MCF 10A (cell line): ENCODE measurements at regions of chr6 and their contacts with region 1.

Region 1: DNA sequence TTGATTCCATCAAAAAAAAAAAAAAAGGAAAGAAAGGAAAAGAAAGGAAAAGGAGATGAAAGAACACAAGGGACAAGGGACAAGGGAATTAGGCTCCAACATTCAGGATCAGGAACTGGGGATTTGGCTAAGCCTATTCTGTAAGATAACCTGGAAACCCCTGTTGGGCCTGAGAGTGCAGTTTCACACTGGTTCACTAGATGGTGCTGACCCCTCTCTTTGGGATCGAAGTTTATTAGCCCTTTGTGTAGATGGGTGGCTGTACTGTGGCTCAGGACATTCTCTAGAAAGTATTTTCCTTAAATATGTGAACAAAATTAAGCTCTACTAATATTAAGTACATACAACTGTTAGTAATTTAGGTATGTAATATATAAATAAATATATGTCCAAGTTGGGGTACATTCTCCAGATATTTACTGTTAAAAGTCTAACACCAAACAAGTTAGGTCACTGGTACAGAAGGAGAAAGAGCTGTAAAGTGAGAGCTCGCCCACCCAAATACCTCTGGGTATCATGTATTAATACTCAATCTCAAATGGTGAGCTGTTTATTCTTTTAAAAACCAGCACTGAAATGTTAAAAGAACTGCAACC is 6.3 kb downstream of the OR2A4 start:
- DNase-seq: peak; percentile 78
- H3K4me3 Mint-ChIP-seq: no peak overlapping the region
- H3K27ac Mint-ChIP-seq: no peak overlapping the region
- H3K4me1 Mint-ChIP-seq: no peaks in the 10 kb centered on the region
- H3K27me3 Mint-ChIP-seq: no peaks in the 10 kb centered on the region
- CTCF ChIP-seq: peak; percentile 92

Region 2: GRCh38 chr6:131615275-131615674 is 79.7 kb before region 1 on chr6:
- CTCF ChIA-PET with region 1: no interaction called
- POLR2A ChIA-PET with region 1: no interaction called
- intact Hi-C with region 1: no loop called
- DNase-seq: no peak
- H3K4me3 Mint-ChIP-seq: no peak overlapping the region
- H3K27ac Mint-ChIP-seq: no peak overlapping the region
- H3K4me1 Mint-ChIP-seq: no peaks in the 10 kb centered on the region
- H3K27me3 Mint-ChIP-seq: no peaks in the 10 kb centered on the region
- CTCF ChIP-seq: no peak

Region 3: GRCh38 chr6:131721161-131721560 is 26.2 kb after region 1 on chr6:
- CTCF ChIA-PET with region 1: interaction called, 10 read pairs
- POLR2A ChIA-PET with region 1: interaction called, 3 read pairs
- intact Hi-C with region 1: no loop called
- DNase-seq: no peak
- H3K4me3 Mint-ChIP-seq: no peak overlapping the region
- H3K27ac Mint-ChIP-seq: no peak overlapping the region
- H3K4me1 Mint-ChIP-seq: no peaks in the 10 kb centered on the region
- H3K27me3 Mint-ChIP-seq: no peaks in the 10 kb centered on the region
- CTCF ChIP-seq: no peak

Region 4: GRCh38 chr6:131728296-131728939 is 33.5 kb after region 1 on chr6:
- CTCF ChIA-PET with region 1: interaction called, 15 read pairs
- POLR2A ChIA-PET with region 1: no interaction called
- intact Hi-C with region 1: no loop called
- DNase-seq: no peak
- H3K4me3 Mint-ChIP-seq: no peak overlapping the region
- H3K27ac Mint-ChIP-seq: no peak overlapping the region
- H3K4me1 Mint-ChIP-seq: peaks cover 3% of the 10 kb centered on the region
- H3K27me3 Mint-ChIP-seq: no peaks in the 10 kb centered on the region
- CTCF ChIP-seq: no peak

Region 5: GRCh38 chr6:131736003-131736596 is 41.2 kb after region 1 on chr6:
- CTCF ChIA-PET with region 1: interaction called, 10 read pairs
- POLR2A ChIA-PET with region 1: no interaction called
- intact Hi-C with region 1: no loop called
- DNase-seq: no peak
- H3K4me3 Mint-ChIP-seq: no peak overlapping the region
- H3K27ac Mint-ChIP-seq: no peak overlapping the region
- H3K4me1 Mint-ChIP-seq: peaks cover 4% of the 10 kb centered on the region
- H3K27me3 Mint-ChIP-seq: no peaks in the 10 kb centered on the region
- CTCF ChIP-seq: no peak

Region 6: DNA sequence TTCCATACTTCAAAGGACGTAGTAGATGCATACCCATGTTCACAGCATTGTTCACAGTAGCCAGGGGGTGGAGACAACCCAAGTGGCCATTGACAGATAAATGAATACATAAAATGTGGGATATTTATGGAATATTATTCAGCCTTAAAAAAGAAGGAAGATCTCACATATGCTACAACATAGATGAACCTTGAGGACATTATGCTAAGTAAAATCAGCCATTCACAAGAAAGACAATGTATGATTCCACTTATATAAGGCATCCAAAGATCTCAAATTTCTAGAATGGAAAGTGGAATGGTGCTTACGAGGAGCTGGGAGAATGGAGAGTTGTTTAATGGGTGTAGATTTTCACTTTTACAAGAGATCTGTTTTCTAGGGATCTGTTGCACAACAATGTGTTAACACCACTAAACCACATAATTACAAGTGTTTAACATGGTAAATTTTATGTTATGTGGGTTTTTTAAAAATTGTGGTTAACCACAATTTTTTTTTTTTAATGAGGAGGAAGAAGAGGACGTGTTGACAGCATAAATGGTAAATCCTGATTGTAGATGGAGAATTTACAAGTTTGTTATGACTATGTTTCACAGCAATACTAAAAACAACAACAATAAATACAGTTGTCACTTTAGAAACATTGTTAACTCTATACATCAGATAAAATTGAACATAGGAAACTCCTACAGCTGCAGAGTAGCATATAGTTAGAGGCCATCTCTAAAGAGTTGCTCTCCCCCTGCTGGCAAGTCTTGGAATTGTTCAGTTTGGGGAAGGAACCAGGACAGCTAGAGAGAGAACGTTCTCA is 214.7 kb after region 1 on chr6:
- CTCF ChIA-PET with region 1: interaction called, 112 read pairs
- POLR2A ChIA-PET with region 1: interaction called, 7 read pairs
- intact Hi-C with region 1: loop called (anchors 1 kb)
- DNase-seq: peak; percentile 86
- H3K4me3 Mint-ChIP-seq: no peak overlapping the region
- H3K27ac Mint-ChIP-seq: no peak overlapping the region
- H3K4me1 Mint-ChIP-seq: no peaks in the 10 kb centered on the region
- H3K27me3 Mint-ChIP-seq: peaks cover 27% of the 10 kb centered on the region
- CTCF ChIP-seq: peak; percentile 79